Heart right ventricle (tissue), 16 donors: ENCODE measurements at regions of chr4 and their contacts with region 1.

Region 1: GRCh38 chr4:118898684-118899138 is 10.1 kb downstream of the SYNPO2 start:
- DNase-seq: peak; percentile 54 to 62
- ATAC-seq: peak; percentile 64 to 94 (median 86)
- H3K4me3 ChIP-seq: peak overlapping the region in 2 of 10 donors; percentile 4 to 7
- H3K27ac ChIP-seq: peak overlapping the region; percentile 38 to 93 (median 82)
- H3K4me1 ChIP-seq: peaks cover 4 to 85% (median 39%) of the 10 kb centered on the region in 9 donors
- H3K27me3 ChIP-seq: no peaks in the 10 kb centered on the region
- CTCF ChIP-seq: no peak

Region 2: DNA sequence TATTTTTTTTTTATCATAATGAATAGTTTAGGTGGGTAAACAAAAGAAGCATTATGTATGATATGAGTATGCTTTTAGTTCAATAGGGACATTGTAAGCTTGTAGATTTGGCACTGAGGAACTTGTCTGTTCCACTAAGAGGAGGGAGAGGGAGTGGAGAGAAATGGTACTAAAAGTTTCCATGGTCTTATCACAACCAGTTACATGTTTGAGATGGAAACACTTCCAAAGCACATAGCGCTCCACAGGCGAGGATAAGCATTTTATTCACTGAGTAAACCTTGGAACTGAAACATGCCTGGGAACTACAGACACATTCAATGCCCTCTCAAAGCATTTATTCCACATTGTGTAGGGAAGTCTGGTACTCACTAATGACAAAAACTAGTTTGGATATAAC is 252.4 kb after region 1 on chr4:
- intact Hi-C with region 1: loop called in 1 of 10 experiments (anchors 5 kb)
- DNase-seq: peak in 1 of 2 donors; percentile 46
- ATAC-seq: peak; percentile 57 to 95 (median 90)
- H3K4me3 ChIP-seq: no peak overlapping the region
- H3K27ac ChIP-seq: peak overlapping the region; percentile 2 to 81 (median 68)
- H3K4me1 ChIP-seq: peaks cover 0 to 58% (median 15%) of the 10 kb centered on the region in 9 donors
- H3K27me3 ChIP-seq: no peaks in the 10 kb centered on the region
- CTCF ChIP-seq: peak in 1 of 9 donors; percentile 13